HepG2 (cell line): ENCODE measurements at regions of chr5 and their contacts with region 1.

Region 1: GRCh38 chr5:123511648-123512605 is at the start of gene CSNK1G3:
- DNase-seq: peak; percentile 93
- ATAC-seq: peak; percentile 97
- H3K4me3 ChIP-seq: peak within 1 kb of the TSS; percentile 89 to 96 (median 92)
- H3K27ac ChIP-seq: peak within 1 kb of the TSS; percentile 89
- H3K4me1 ChIP-seq: peaks cover 39% of the 10 kb centered on the region
- H3K27me3 ChIP-seq: no peaks in the 10 kb centered on the region; a peak in 1 of 5 replicates
- CTCF ChIP-seq: peak; percentile 27; the same call in 1 of the 2 replicates
- EP300 ChIP-seq: peak in 1 of 2 experiments; percentile 50; a peak in 1 of 4 replicates
- POLR2A ChIP-seq: peak; percentile 98 to 99
- RAD21 ChIP-seq: peak; percentile 64
- total RNA-seq, gene CSNK1G3: 31.5 and 35.4 TPM in 2 replicates

Region 2: DNA sequence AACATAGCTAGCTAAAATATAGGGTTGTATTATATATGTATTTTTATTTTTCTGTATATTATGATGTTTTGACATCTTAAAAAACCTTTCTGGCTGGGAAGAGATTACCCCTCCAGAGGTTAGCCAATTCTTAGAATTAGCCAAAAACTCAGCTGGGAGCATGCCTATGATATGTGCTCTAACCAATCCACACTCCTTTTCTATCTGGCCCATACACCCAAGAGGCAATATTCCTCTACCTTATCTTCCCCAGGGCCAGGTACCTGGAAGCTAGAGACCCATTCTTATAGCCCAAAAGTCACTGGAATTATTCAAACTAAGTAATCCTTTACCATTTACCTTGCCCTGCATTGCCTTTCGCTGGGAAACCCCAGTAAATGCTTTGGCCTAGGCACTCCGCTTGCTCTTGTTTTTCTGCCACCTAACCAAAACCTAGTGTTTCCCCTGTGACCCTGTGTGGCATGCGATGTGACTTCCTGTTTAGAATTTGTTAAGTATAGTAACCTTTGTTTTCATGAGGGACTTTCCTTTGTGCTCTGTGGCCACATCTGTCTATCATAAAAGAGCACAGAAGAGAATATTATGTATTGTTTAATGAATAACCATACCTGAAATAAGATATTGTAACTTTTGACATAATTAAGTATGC is 37.5 kb after region 1 on chr5:
- CTCF ChIA-PET with region 1: no interaction called
- POLR2A ChIA-PET with region 1: no interaction called
- in situ Hi-C with region 1: no loop called
- intact Hi-C with region 1: no loop called
- DNase-seq: no peak
- ATAC-seq: no peak
- H3K4me3 ChIP-seq: no peak overlapping the region
- H3K27ac ChIP-seq: no peak overlapping the region
- H3K4me1 ChIP-seq: no peaks in the 10 kb centered on the region
- H3K27me3 ChIP-seq: no peaks in the 10 kb centered on the region
- CTCF ChIP-seq: no peak
- EP300 ChIP-seq: no peak
- POLR2A ChIP-seq: no peak
- RAD21 ChIP-seq: no peak

Region 3: DNA sequence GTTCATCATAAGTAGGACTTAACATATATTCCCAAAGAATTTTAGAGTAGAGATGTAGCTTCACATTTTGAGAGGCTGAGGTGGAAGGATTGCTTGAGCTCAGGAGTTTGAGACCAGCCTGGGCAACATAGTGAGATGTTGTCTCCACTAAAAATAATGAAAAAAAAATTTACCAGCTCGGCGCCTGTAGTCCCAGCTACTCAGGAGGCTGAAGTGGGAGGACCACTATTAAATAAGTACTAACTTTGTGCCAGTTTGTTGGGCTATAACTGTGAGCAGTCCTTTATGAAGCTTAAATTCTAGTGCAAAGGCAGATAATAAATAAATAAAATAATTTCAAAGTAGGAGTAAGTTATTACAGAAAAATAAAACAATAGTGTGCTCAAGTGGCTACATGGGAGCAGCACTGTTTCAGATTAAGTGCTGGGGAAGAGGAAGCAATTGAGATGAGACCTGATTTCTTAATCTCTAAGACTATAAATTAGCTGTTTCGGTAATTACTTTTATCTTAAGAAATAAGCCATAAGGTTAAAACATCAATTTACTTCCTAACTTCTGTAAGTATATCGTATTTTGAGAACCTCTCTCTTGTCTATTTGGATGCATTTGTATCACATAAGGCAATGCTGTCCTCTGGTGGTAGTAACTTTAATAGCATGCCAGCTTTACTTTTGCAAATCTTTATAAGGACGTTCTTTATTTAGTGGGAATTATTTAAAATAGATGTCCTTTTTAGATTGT is 98.9 kb after region 1 on chr5:
- CTCF ChIA-PET with region 1: no interaction called
- POLR2A ChIA-PET with region 1: no interaction called
- in situ Hi-C with region 1: no loop called
- intact Hi-C with region 1: loop called (anchors 5 kb)
- DNase-seq: peak; percentile 54
- ATAC-seq: peak; percentile 61
- H3K4me3 ChIP-seq: no peak overlapping the region
- H3K27ac ChIP-seq: no peak overlapping the region
- H3K4me1 ChIP-seq: no peaks in the 10 kb centered on the region
- H3K27me3 ChIP-seq: no peaks in the 10 kb centered on the region
- CTCF ChIP-seq: peak; percentile 76
- EP300 ChIP-seq: no peak
- POLR2A ChIP-seq: no peak
- RAD21 ChIP-seq: peak; percentile 76